Dendritic cell treated with granulocyte-macrophage colony-stimulating factor and Interleukin-4, amounts not matched to agents 40 ng/mL and 50 ng/mL, for 4 days (primary cell): ENCODE measurements at regions of chr11 and their contacts with region 1.

Region 1: DNA sequence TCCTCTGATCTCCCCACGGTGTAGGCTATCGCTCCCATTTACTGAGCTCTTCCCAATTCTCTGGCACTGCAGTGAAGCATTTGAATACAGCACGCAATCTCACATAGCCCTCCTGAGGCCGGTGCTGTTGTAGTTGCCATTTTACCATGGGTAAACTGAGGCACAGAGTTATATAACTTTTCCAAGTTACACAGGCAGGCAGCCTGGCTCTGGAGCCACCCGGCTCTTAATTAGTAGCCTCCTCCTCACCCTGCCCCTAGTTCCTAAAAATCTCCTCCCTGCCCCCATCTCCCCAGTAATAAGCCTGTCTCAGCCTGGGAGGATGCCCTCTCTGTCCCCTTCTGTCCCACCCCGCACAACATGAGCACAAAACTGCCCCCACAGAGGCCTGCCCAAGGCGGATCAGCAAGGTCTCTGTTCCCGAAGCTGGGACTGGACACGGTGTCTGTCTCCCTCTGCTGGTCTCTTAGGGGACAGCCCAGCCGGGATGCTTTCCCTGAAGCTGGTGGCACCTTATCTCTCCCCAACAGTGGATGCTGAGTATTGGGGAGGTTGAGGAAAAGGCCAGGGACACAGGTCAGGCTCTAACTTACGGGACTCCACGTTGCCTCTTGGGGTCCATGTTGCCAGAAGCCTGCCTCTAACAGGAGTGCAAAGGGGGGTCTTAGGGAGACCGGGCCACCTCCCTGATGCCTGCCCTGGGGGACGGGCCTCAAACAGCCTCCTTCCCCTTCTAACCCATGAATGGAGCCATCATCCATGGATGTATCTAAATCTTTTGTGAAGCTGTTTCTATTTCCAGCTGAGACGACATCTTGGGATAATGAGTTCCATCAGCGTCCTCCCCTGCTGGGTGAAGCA is 9.1 kb upstream of the CLCF1 start:
- H3K4me3 Mint-ChIP-seq: no peak overlapping the region
- H3K27ac Mint-ChIP-seq: peak overlapping the region; percentile 28
- H3K4me1 Mint-ChIP-seq: peaks cover 55% of the 10 kb centered on the region
- H3K27me3 Mint-ChIP-seq: peaks cover 5% of the 10 kb centered on the region

Region 2: GRCh38 chr11:67332081-67332691 is 50.3 kb before region 1 on chr11:
- intact Hi-C with region 1: loop called (anchors 10 kb)
- H3K4me3 Mint-ChIP-seq: no peak overlapping the region
- H3K27ac Mint-ChIP-seq: no peak overlapping the region
- H3K4me1 Mint-ChIP-seq: no peaks in the 10 kb centered on the region
- H3K27me3 Mint-ChIP-seq: no peaks in the 10 kb centered on the region

Region 3: GRCh38 chr11:67345247-67345919 is 37.1 kb before region 1 on chr11:
- intact Hi-C with region 1: no loop called
- H3K4me3 Mint-ChIP-seq: no peak overlapping the region
- H3K27ac Mint-ChIP-seq: no peak overlapping the region
- H3K4me1 Mint-ChIP-seq: peaks cover 32% of the 10 kb centered on the region
- H3K27me3 Mint-ChIP-seq: no peaks in the 10 kb centered on the region